ENCODE measurements at regions of chr6 and their contacts with region 1.

Region 1: GRCh38 chr6:41713161-41713649 is 22.2 kb downstream of the TFEB start:
- DNase-seq: peak; percentile 94
- H3K4me3 Mint-ChIP-seq: peak overlapping the region; percentile 7
- H3K27ac Mint-ChIP-seq: peak overlapping the region; percentile 35
- H3K4me1 Mint-ChIP-seq: peaks cover 45% of the 10 kb centered on the region
- H3K27me3 Mint-ChIP-seq: no peaks in the 10 kb centered on the region
- CTCF ChIP-seq: no peak

Region 2: DNA sequence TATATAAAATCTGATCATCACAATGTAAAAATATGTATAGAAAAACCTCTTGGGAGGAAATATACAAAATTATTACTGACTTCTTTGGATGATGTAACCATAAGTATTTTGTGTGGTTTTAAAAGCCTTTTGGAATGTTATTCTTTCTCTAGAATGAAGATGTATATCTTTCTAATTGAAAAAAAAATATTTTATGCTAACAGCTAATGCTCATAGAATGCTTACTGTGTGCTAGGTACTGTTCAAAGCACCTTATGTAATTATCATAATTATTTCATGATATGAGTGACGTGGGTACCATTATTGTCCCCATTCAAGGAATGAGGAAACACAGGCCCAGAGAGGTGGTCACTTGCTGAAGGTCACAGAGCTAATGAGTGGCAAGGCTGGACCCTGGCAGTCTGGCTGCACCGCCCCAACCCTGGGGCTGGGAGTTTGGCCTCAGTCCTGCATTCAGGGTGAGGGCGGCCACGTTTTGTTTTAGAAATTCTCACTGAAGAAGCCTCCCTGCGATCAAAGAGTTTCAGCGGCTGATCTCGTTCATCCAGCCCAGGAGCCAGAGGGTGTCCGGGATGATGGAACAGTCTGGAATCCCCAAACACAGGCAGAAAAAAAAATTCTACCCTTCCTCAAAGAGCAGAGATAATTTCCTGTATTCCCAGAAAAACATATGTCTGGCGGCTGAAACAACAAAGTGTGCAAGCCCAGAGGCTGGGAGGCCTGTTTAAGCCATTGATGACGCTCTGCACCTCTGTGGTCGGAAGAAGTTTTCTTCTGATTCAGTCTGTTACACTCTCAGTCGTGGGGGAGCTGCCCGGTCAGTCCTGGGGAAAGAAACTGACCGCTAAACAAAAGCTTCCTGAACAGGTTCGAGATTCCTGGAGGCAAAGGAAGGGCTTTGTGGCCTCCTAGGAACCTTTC is 15.1 kb before region 1 on chr6:
- CTCF ChIA-PET with region 1: interaction called, 3 read pairs
- POLR2A ChIA-PET with region 1: interaction called, 11 read pairs
- intact Hi-C with region 1: no loop called
- DNase-seq: peak; percentile 64
- H3K4me3 Mint-ChIP-seq: peak overlapping the region; percentile 46
- H3K27ac Mint-ChIP-seq: peak overlapping the region; percentile 93
- H3K4me1 Mint-ChIP-seq: peaks cover 26% of the 10 kb centered on the region
- H3K27me3 Mint-ChIP-seq: no peaks in the 10 kb centered on the region
- CTCF ChIP-seq: no peak

Region 3: DNA sequence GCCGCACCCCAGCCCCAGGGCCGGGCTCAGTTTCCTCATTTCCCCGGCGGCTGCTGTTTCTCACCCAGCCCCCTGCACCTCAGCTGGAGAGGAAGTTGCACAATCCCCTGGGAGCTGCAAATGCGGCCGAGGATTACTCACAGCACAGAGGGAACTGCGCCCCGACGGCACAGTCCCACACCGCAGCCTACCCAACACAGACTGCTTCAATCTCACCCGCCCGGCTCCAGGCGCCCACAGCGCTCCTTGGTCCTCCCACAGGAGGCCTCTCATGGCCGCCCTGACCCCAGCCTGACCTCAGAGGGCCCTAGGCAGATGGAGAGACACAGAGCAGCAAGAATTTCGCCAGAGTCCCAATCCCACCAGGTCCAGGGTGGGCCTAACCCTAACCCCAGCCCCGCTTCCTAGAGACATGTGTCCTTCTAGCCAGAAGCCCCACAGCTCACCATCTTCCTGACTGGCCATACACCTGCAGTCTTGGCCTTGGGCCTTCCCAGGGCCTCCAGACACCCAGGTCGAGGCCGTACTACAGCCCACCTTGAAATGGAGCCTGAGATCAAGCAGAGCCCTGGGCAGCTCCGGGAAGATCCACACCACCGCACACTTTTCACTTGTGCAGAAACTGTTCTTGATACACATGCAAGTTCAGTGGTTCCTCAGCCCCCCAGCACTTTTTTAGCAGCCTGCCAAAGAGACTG is 10.5 kb after region 1 on chr6:
- CTCF ChIA-PET with region 1: no interaction called
- POLR2A ChIA-PET with region 1: interaction called, 52 read pairs
- intact Hi-C with region 1: no loop called
- DNase-seq: peak; percentile 92
- H3K4me3 Mint-ChIP-seq: peak overlapping the region; percentile 54
- H3K27ac Mint-ChIP-seq: peak overlapping the region; percentile 94
- H3K4me1 Mint-ChIP-seq: peaks cover 41% of the 10 kb centered on the region
- H3K27me3 Mint-ChIP-seq: no peaks in the 10 kb centered on the region
- CTCF ChIP-seq: no peak

Region 4: GRCh38 chr6:42692137-42692911 is 979.1 kb after region 1 on chr6:
- CTCF ChIA-PET with region 1: no interaction called
- POLR2A ChIA-PET with region 1: no interaction called
- intact Hi-C with region 1: no loop called
- DNase-seq: peak; percentile 63
- H3K4me3 Mint-ChIP-seq: no peak overlapping the region
- H3K27ac Mint-ChIP-seq: peak overlapping the region; percentile 39
- H3K4me1 Mint-ChIP-seq: peaks cover 19% of the 10 kb centered on the region
- H3K27me3 Mint-ChIP-seq: no peaks in the 10 kb centered on the region
- CTCF ChIP-seq: no peak

Measured in MCF 10A (cell line).